Prostate gland (tissue), 2 donors: ENCODE measurements at regions of chr2 and their contacts with region 1.

Region 1: DNA sequence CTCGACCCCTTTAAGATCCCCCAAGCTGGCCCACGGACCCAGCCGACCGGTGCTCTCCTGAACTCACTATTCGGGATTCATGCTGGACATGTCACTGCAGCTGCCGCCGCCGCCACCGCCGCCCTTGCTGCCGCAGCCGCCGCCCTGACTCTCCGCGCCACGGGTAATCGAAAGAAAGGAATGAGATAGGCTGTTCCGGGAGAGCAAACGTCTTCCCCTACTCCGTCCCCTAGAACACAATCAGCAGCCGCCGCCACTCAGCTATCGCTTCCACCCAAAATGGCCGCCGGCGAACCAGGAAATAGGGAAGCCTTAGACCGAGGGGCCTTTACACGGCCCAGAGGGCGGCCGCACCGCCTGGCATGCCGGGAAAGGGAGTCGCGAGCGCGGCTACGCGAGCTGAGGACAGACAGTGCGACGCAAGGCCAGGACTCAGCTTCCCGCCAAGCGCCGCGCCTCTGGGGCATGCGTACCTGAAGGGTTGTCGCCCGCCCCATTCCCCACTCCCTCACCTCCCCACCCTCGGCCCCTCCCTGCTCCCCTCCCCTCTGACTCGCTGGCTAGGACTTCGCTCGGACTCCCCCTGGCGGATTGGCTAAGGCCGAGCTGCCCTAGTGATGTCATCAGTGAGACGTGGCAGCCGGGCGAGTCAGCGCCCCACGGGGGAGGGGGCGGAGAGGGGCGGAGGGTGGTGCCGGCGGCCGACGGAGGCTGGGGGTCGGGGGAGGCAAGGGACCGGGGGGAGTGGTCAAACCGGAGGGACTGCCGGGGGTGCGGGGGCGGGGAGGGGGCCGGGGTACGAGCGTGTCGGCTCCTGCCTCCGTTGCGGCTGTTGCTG is at the start of gene RAB1A:
- DNase-seq: peak; percentile 99
- H3K4me3 ChIP-seq: peak within 1 kb of the TSS; percentile 85 to 95
- H3K27ac ChIP-seq: peak within 1 kb of the TSS; percentile 97
- H3K4me1 ChIP-seq: no peaks in the 10 kb centered on the region
- H3K27me3 ChIP-seq: no peaks in the 10 kb centered on the region
- CTCF ChIP-seq: peak in 3 of 4 experiments; percentile 59 to 86 (median 64)
- POLR2A ChIP-seq: peak; percentile 92
- total RNA-seq, gene RAB1A: 50.3 to 67.6 TPM

Region 2: GRCh38 chr2:64988420-64989125 is 141.5 kb before region 1 on chr2:
- intact Hi-C with region 1: loop called (anchors 5 kb)
- DNase-seq: peak; percentile 62
- H3K4me3 ChIP-seq: peak overlapping the region; percentile 65 to 68
- H3K27ac ChIP-seq: peak overlapping the region; percentile 93 to 94
- H3K4me1 ChIP-seq: no peaks in the 10 kb centered on the region
- H3K27me3 ChIP-seq: no peaks in the 10 kb centered on the region
- CTCF ChIP-seq: peak in 3 of 4 experiments; percentile 12 to 58 (median 54)
- POLR2A ChIP-seq: peak; percentile 37

Region 3: GRCh38 chr2:65056215-65057053 is 73.6 kb before region 1 on chr2 and contains the start of gene CEP68:
- intact Hi-C with region 1: loop called (anchors 5 kb)
- DNase-seq: peak; percentile 97
- H3K4me3 ChIP-seq: peak within 1 kb of the TSS; percentile 79 to 90
- H3K27ac ChIP-seq: peak within 1 kb of the TSS; percentile 76 to 81
- H3K4me1 ChIP-seq: no peaks in the 10 kb centered on the region
- H3K27me3 ChIP-seq: no peaks in the 10 kb centered on the region
- CTCF ChIP-seq: peak in 2 of 4 experiments; percentile 20 to 34
- POLR2A ChIP-seq: peak; percentile 94
- total RNA-seq, gene CEP68: 15.3 to 28.8 TPM

Region 4: DNA sequence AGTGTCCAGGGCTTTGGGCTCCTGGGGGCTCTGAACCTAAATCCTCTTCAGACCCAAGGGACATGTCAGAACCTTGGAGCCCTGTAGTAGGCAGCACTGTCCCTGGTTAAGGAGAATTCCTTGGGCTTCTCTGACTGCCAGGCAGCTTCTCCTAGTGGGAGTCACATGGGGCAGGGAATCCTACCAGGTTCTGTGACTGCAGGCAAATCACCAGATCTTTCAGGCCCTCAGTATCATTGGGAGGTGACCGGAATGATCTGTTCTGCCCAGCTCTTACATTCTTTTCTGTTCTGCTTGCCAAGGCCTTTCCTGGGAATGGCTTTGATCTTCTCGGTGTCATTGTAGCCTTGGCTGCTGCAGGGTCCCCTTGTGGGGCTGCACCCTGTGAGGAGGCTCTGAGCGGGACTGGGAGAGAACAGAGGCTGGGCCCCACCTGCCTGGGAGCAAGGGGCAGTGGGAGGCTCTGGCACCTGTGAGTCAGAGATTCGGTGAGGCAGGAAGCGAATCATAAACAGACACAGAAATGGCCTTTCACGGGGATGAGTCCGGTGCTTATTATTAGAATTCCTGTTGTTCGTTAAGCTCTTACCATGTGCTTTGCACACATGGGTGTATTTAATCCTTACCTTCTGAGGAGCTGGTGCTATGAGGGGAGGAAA is 59.7 kb before region 1 on chr2:
- intact Hi-C with region 1: loop called (anchors 5 kb)
- DNase-seq: no peak
- H3K4me3 ChIP-seq: no peak overlapping the region
- H3K27ac ChIP-seq: peak overlapping the region; percentile 20 to 36
- H3K4me1 ChIP-seq: peaks cover 2% of the 10 kb centered on the region
- H3K27me3 ChIP-seq: no peaks in the 10 kb centered on the region
- CTCF ChIP-seq: no peak
- POLR2A ChIP-seq: no peak

Region 5: GRCh38 chr2:65096948-65097347 is 33.1 kb before region 1 on chr2:
- intact Hi-C with region 1: no loop called
- DNase-seq: no peak
- H3K4me3 ChIP-seq: no peak overlapping the region
- H3K27ac ChIP-seq: no peak overlapping the region
- H3K4me1 ChIP-seq: no peaks in the 10 kb centered on the region
- H3K27me3 ChIP-seq: no peaks in the 10 kb centered on the region
- CTCF ChIP-seq: no peak
- POLR2A ChIP-seq: no peak

Region 6: DNA sequence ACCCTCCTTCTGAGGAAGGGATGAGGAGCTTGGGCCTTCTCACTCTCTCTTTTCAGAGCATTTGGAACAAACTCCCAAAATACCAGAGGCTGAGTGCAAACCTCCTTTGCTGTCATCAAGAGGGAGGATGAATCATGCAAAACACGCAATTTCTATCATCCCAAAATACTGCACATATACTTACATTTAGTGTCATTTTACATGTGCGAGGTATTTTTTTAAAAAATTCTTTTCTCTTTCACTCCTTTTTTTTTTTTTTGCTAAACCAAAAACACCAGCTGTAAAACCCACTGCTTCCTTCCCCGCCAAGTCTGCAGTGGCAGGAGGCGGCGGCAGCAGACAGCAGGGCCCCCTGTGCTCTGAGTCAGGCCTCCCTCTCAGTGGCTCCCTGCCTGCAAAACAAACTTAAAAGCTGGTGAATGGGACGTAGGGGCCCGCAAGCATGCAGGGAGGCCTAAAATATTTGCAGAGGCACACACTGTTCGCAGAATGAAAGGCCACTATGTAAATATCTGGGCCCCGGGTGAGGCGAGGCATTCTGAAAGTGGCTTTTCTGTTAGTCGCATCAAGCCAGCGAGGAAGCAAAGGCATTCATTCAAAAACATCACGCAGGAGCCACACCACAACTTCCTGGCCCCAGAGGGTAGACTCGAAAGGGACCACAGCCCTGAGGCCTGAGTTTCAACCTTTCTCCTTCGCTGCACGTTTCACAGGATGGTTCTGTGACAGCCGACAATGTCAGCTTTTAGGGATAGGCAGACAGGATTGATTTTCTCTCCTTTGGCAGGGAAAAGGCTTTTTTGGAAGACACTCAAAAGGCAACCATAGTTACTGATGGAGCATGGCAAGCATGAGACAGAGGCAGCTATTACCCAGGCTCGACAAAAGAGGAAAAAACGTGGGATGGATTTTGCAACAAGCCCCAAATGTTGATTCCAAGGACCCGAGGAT is 171.0 kb after region 1 on chr2:
- intact Hi-C with region 1: no loop called
- DNase-seq: peak; percentile 55
- H3K4me3 ChIP-seq: no peak overlapping the region
- H3K27ac ChIP-seq: peak overlapping the region; percentile 65 to 69
- H3K4me1 ChIP-seq: peaks cover 13% of the 10 kb centered on the region
- H3K27me3 ChIP-seq: no peaks in the 10 kb centered on the region
- CTCF ChIP-seq: no peak
- POLR2A ChIP-seq: no peak

Region 7: DNA sequence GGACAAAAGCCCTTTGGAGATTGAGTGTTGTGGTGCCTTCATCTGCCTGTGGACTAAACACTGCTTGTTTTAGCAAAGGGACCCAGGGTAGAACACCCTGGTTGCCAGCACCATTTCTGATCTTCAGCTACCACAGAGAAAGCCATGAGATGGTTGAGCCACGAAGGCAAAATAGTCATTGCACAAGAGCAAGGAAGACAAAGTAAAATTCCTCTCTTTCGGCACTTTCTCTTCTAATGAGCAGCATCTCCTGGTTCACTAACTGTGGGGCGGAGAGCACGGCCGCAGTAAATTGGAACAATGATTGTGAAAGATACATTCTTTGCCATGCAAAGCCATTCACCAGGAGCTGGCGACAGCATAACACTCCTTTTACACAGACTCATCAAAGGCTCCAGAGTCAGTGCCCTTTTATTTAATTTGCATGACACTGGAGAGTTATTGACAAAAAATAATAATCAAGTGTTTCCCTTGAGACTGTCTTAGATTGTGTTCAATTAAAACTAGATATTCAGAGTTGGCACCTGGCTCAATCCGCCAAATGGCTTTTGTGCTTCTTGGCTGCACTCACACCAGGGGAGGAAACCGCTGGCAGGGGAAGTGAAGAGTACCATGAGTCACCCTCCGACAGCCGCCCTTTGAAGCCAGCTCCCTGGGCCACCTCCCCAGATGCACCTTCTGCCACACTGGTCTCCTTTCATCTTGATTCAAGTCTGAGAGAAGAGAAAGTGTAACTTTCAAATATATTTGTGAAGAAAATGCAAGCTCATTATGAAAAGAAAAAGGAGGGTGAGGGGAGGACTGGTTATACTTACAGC is 1204.4 kb after region 1 on chr2:
- intact Hi-C with region 1: no loop called
- DNase-seq: no peak
- H3K4me3 ChIP-seq: no peak overlapping the region
- H3K27ac ChIP-seq: no peak overlapping the region
- H3K4me1 ChIP-seq: no peaks in the 10 kb centered on the region
- H3K27me3 ChIP-seq: no peaks in the 10 kb centered on the region
- CTCF ChIP-seq: no peak
- POLR2A ChIP-seq: no peak